Activated CD8-positive, alpha-beta memory T cell treated with anti-CD3 and anti-CD28 coated beads, Interleukin-2, amount 10 ng/mL, durations not matched to agents 7 days and 5 days (primary cell): ENCODE measurements at regions of chr17 and their contacts with region 1.

Region 1: GRCh38 chr17:27236717-27237315 is 57.1 kb upstream of the WSB1 start:
- DNase-seq: peak; percentile 85
- ATAC-seq: peak; percentile 42
- H3K4me3 Mint-ChIP-seq: no peak overlapping the region
- H3K27ac Mint-ChIP-seq: no peak overlapping the region
- H3K4me1 Mint-ChIP-seq: peaks cover 33% of the 10 kb centered on the region
- H3K27me3 Mint-ChIP-seq: peaks cover 11% of the 10 kb centered on the region

Region 2: DNA sequence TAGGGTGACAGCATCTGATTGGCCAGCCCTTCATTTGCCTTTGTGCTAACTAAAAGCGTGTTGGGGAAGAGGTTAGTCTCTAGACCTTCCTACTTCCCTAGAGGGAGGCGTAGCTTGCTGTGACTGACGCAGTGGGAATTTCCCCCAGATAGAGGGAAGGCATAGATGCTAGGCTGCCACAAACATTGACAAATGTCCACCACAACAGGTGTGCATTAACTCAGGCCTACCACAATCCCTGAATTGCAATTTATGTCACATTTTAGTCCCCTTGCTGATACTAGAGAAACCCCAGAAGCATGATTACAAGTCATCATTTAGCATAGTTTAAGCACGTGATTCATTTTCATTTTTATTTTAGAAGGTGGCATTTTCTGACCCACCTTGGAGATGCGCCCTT is 19.2 kb before region 1 on chr17:
- CTCF ChIA-PET with region 1: interaction called, 17 read pairs
- DNase-seq: no peak
- ATAC-seq: no peak
- H3K4me3 Mint-ChIP-seq: no peak overlapping the region
- H3K27ac Mint-ChIP-seq: peak overlapping the region; percentile 96
- H3K4me1 Mint-ChIP-seq: peaks cover 29% of the 10 kb centered on the region
- H3K27me3 Mint-ChIP-seq: no peaks in the 10 kb centered on the region

Region 3: DNA sequence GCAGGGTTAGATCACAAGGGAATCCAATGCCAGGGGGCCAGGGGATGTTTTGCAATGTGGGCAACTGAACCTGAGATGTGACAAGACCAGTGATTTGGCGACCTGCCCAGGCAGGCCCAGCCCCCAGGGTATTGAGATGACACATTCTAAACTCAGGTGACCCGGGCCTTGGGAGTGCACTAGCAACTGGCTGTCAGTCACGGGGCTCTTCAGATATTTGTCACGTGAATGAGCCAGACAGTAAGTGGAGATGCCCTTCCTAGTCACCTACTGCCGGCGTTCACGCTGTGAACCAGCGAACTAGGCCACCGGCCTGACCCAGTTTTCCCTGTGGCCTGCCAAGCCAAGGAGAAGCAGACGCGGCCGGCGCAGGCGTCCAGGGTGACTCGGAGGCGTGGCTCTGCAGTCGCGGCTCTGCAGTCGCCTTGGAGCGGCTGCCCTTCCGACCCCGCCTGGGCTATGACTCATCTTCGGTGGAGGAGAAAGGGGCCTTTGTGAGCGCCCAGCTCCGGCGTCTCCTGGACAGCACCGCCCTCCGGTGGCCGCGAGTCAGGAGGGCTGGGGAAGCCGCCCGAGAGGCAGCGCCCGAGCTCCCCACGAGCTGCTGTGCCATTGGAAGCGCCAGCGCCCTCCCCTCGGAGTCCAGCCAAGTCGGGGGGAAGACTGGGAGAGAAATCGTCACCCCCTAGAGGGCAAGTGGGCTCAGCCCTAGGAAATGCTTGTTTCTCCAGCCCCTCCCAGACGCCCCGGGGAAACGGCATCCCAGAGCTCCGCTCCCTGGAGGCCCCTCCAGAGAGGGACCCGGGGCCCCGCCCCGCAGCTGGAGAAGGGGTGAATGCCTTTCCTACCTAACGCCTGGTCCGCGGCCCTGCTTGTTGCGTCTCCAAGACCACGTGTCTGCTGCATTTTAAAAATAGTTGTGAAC is 95.9 kb after region 1 on chr17:
- CTCF ChIA-PET with region 1: interaction called, 139 read pairs
- DNase-seq: peak; percentile 95
- ATAC-seq: peak; percentile 96
- H3K4me3 Mint-ChIP-seq: peak overlapping the region; percentile 76
- H3K27ac Mint-ChIP-seq: peak overlapping the region; percentile 79
- H3K4me1 Mint-ChIP-seq: peaks cover 28% of the 10 kb centered on the region
- H3K27me3 Mint-ChIP-seq: no peaks in the 10 kb centered on the region

Region 4: DNA sequence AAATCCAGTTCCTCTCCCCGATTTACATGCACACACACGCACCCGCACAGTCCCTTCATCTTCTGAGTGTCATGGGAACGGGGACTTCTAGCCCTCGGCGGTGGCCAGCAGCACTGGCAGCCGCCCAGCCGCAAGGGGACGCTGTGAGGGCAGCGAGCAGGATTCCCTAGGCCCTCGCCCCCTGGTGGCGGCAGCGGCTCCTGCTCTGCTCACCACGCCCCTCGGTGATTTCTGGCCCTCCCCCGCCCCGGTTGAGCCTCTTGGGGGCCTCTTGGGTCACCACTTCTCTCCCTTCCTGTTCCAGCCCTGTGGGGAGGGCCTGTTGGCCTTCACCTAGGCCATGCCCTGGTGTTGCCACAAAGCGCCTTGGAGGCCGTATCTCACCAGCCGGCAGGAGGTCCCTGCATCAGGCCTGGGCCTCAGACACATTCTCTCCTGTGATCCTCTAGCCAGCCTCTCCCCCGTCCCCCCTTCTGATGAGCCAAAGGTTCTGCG is 144.2 kb after region 1 on chr17:
- CTCF ChIA-PET with region 1: interaction called, 10 read pairs
- DNase-seq: peak; percentile 83
- ATAC-seq: peak; percentile 91
- H3K4me3 Mint-ChIP-seq: no peak overlapping the region
- H3K27ac Mint-ChIP-seq: no peak overlapping the region
- H3K4me1 Mint-ChIP-seq: peaks cover 11% of the 10 kb centered on the region
- H3K27me3 Mint-ChIP-seq: peaks cover 30% of the 10 kb centered on the region